ENCODE measurements at regions of chr9 and their contacts with region 1.

Region 1: DNA sequence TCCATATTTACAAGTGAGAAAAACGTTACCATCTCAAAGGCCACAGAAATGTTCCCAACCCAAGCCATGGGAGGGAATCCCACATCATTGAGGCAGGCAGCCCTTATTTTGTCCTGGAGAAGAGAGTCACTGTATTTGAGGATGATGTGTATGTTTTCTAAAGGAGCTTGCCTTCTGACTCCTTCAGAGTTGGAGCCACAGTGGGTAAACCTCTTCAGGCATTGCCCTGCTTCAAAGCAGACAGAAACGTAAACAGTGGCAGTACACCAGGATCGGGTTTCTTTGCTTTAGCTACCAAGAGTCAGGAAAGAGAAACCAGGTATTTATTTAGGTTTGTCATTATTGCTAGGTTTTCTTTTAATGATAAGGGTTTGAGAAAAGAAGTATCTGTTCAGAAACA is 45.7 kb downstream of the MUSK start:
- DNase-seq: no peak
- ATAC-seq: no peak
- H3K4me3 ChIP-seq: no peak overlapping the region
- H3K27ac ChIP-seq: no peak overlapping the region
- H3K4me1 ChIP-seq: no peaks in the 10 kb centered on the region
- H3K27me3 ChIP-seq: no peaks in the 10 kb centered on the region; a peak in 1 of 4 replicates
- CTCF ChIP-seq: no peak
- EP300 ChIP-seq: no peak
- POLR2A ChIP-seq: no peak
- RAD21 ChIP-seq: no peak

Region 2: GRCh38 chr9:110700953-110701352 is 13.4 kb before region 1 on chr9:
- CTCF ChIA-PET with region 1: interaction called, 4 read pairs
- POLR2A ChIA-PET with region 1: interaction called, 3 read pairs
- RAD21 ChIA-PET with region 1: no interaction called
- SMC1A ChIA-PET with region 1: interaction called, 27 read pairs
- in situ Hi-C with region 1: no loop called
- intact Hi-C with region 1: no loop called
- DNase-seq: no peak
- ATAC-seq: no peak
- H3K4me3 ChIP-seq: no peak overlapping the region
- H3K27ac ChIP-seq: no peak overlapping the region
- H3K4me1 ChIP-seq: no peaks in the 10 kb centered on the region
- H3K27me3 ChIP-seq: no peaks in the 10 kb centered on the region
- CTCF ChIP-seq: no peak
- EP300 ChIP-seq: no peak
- POLR2A ChIP-seq: no peak
- RAD21 ChIP-seq: no peak

Region 3: DNA sequence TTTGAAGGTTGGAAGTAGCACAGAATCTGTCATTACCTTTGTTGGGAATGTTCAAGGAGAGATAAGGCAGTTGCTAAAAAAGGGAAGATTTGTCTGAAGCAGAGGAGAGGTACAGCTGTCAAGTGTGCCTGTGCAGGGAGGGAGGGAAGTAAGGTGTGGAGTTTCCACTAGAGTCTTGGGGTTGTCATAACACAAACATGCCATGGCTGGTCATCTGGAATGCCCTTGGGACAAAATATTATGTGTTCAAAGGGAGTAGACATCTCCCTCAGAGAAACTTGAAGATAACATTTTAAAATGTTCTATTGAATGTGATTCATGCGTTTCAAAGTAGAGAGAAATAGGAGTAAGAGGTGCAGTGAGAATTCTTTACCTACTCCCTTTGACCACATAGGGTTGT is 49.3 kb after region 1 on chr9:
- CTCF ChIA-PET with region 1: interaction called, 3 read pairs
- POLR2A ChIA-PET with region 1: no interaction called
- RAD21 ChIA-PET with region 1: no interaction called
- SMC1A ChIA-PET with region 1: no interaction called
- in situ Hi-C with region 1: no loop called
- intact Hi-C with region 1: loop called (anchors 5 kb)
- DNase-seq: no peak
- ATAC-seq: no peak
- H3K4me3 ChIP-seq: no peak overlapping the region
- H3K27ac ChIP-seq: no peak overlapping the region
- H3K4me1 ChIP-seq: no peaks in the 10 kb centered on the region
- H3K27me3 ChIP-seq: no peaks in the 10 kb centered on the region
- CTCF ChIP-seq: no peak
- EP300 ChIP-seq: no peak
- POLR2A ChIP-seq: no peak
- RAD21 ChIP-seq: no peak

Measured in GM12878 (cell line).